HEK293 (cell line): ENCODE measurements at regions of chr4 and their contacts with region 1.

Region 1: DNA sequence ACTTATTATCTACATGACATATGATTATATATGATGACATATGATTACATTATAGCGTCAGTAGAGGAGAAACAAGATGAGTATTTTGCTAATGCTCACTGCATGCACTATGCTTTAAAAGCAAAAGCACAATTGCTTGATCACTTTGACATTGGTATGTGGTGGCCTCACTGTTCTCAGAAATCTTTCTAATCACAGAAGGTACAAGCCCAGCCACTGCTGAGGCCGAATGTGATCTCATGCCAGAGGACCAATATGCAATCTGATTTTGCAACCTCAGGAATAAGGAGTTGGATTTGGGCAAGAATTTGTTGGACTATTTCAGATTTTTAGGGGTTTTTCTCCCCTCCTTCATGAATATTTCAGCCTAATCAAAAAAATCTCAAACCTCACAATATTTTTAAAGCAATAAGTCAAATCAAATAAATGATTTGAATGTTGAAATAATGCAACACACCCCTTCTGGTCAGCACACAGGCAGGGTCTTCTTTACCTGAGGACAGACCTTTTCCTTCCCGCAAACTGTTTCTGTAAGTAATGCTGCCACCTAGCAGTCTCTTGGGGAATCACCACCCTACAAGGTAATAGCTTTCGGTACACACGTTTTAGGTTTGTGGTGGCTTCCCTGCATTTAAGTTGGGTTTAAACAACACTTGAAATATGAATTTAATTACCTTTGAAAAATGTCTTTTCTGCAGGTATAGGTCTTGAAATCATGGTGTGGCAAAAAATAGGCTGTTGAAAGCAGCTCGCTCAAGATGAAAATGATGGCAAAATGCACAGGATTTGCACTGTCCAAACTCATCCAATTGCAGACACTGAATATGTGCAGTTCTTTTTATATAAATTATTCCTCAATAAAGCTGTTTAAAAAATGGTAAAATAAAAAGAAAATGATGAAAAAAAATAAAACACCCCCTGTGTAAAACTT is 4.8 kb upstream of the CXCL13 start:
- H3K4me3 ChIP-seq: no peak overlapping the region
- H3K27ac ChIP-seq: no peak overlapping the region
- H3K4me1 ChIP-seq: no peaks in the 10 kb centered on the region
- CTCF ChIP-seq: no peak; the same call in 1 of the 2 replicates

Region 2: GRCh38 chr4:77220828-77221613 is 379.8 kb before region 1 on chr4:
- CTCF ChIA-PET with region 1: no interaction called
- POLR2A ChIA-PET with region 1: no interaction called
- H3K4me3 ChIP-seq: no peak overlapping the region
- H3K27ac ChIP-seq: no peak overlapping the region
- H3K4me1 ChIP-seq: no peaks in the 10 kb centered on the region
- CTCF ChIP-seq: no peak

Region 3: GRCh38 chr4:77385124-77385969 is 215.4 kb before region 1 on chr4:
- CTCF ChIA-PET with region 1: interaction called, 15 read pairs
- POLR2A ChIA-PET with region 1: no interaction called
- H3K4me3 ChIP-seq: no peak overlapping the region
- H3K27ac ChIP-seq: no peak overlapping the region
- H3K4me1 ChIP-seq: no peaks in the 10 kb centered on the region
- CTCF ChIP-seq: peak; percentile 58

Region 4: DNA sequence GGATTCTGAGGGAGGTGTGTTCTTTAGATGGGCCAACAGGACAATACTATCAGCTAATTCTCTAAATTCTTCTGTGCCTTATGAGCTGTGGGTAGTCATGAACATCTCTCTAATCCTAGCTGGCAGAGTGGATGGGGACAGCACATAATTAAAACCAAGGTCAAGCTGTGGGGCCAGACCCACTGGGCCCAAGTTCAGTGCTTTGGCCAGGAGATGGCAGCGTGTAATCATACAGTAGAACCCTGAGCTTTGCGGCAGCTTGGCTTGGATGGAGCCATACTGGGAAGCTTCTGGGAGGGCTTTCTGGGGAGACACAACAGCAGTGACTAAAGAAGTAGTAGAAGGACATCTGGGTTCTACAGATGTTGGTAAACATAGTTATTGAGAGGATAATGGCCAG is 135.5 kb before region 1 on chr4:
- CTCF ChIA-PET with region 1: interaction called, 37 read pairs
- POLR2A ChIA-PET with region 1: no interaction called
- H3K4me3 ChIP-seq: no peak overlapping the region
- H3K27ac ChIP-seq: no peak overlapping the region
- H3K4me1 ChIP-seq: no peaks in the 10 kb centered on the region
- CTCF ChIP-seq: 0 out of 2 replicates have a peak, but pooled peaks have one; percentile 15

Region 5: GRCh38 chr4:77473509-77473908 is 127.3 kb before region 1 on chr4:
- CTCF ChIA-PET with region 1: interaction called, 10 read pairs
- POLR2A ChIA-PET with region 1: no interaction called
- H3K4me3 ChIP-seq: no peak overlapping the region
- H3K27ac ChIP-seq: no peak overlapping the region
- H3K4me1 ChIP-seq: no peaks in the 10 kb centered on the region
- CTCF ChIP-seq: no peak